Caco-2 (cell line): ENCODE measurements at regions of chr6 and their contacts with region 1.

Region 1: DNA sequence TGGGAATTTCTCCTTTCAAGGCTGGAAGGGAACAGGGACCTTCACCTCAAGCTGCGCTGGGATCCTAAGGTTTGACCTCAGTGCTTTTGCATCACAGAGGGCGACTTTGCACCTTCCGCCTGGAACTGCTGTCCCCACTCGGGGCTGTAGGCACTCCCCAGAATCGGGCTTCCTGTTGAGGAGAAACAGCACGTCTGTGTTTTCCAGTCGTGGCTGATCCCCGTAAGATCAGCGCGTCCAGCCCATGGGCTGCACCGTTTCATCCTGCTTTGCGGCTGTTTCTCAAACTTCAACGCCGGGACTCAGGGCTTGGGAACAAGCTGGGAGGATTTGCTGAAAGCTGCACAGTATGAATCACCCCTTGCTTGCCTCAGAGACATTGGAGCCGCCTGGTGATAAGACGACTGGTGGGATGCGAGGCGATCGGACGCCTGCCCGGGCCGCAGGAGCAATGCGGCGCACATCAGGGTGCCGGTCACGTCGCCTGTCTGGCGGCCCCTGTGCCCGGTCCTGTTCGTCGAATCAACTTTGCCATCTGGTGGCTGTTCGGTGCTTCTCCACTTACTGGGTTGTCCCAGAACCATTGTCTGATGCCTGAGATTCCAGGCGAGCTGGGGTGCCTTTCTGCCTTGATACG is 53.6 kb upstream of the FRMD1 start:
- DNase-seq: peak in 1 of 2 experiments; percentile 32
- H3K4me3 ChIP-seq: no peak overlapping the region
- H3K4me3 Mint-ChIP-seq: no peak overlapping the region
- H3K27ac Mint-ChIP-seq: no peak overlapping the region
- H3K4me1 ChIP-seq: peaks cover 37% of the 10 kb centered on the region
- H3K4me1 Mint-ChIP-seq: peaks cover 27% of the 10 kb centered on the region
- H3K27me3 ChIP-seq: no peaks in the 10 kb centered on the region
- H3K27me3 Mint-ChIP-seq: no peaks in the 10 kb centered on the region
- CTCF ChIP-seq: peak in 1 of 2 experiments; percentile 32

Region 2: DNA sequence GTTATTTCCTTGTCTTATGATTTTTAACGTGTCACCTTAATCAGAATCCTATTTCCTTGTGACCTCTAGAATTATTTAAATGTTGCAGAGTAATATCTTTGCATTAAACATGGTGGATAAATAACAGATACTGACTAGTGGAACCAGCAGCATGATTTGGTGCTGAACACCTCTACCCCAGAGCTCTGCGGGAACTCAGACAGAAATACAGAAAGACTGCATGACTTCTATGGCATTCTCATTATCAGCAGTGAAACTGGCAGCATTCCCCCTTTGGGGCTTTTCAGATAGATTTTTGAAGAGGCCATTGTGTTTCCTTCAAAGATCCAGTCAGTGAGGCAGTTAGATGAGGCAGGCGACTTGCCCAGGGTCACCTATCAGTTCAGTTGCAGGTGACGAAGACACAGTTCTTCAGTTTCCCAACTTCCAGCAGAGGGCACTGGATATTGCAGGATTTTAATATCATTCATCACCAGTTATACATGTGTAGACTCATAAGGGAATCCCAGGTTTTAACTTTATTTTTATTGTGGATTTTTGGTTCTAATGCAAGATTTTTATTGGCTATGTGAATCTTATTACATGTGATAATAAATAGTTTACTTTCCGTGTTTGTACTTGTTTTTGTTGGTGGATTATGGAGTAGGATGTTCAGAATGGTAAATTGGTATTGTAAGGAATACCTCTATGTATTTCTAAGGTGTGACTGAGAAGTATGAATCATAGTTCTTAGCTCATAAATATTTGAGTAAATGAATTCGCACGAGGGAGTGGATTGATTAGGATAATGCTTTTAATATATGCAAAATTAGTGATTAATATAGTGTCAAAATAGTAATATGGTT is 224.6 kb before region 1 on chr6:
- CTCF ChIA-PET with region 1: interaction called, 4 read pairs
- POLR2A ChIA-PET with region 1: no interaction called
- intact Hi-C with region 1: loop called (anchors 5 kb)
- DNase-seq: peak in 1 of 2 experiments; percentile 39
- H3K4me3 ChIP-seq: no peak overlapping the region
- H3K4me3 Mint-ChIP-seq: no peak overlapping the region
- H3K27ac Mint-ChIP-seq: no peak overlapping the region
- H3K4me1 ChIP-seq: peaks cover 13% of the 10 kb centered on the region; the same call in 1 of the 2 replicates
- H3K4me1 Mint-ChIP-seq: peaks cover 15% of the 10 kb centered on the region
- H3K27me3 ChIP-seq: no peaks in the 10 kb centered on the region
- H3K27me3 Mint-ChIP-seq: no peaks in the 10 kb centered on the region
- CTCF ChIP-seq: peak; percentile 33 to 41

Region 3: DNA sequence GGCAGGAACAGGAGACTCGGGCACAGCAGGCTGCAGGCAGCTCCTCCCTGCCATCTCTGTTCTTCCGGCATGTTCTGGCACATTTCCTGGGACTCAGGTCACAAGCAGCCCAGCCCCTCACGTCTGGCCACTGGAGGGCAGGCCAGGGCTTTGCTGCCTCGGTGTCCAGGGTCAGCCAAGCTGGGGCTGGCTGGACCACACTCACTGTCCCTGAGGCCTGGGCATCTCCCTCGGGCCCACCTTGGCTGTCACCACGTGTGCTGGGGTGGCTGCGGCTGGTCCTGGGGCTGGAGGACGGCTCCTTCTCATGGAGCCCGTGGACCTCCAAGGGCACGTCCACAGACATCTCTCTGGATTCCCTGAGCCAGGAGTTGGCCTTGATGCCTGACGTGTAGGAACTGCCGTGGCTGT is 72.1 kb before region 1 on chr6:
- CTCF ChIA-PET with region 1: interaction called, 20 read pairs
- POLR2A ChIA-PET with region 1: no interaction called
- intact Hi-C with region 1: loop called (anchors 1 kb)
- DNase-seq: peak; percentile 64 to 75
- H3K4me3 ChIP-seq: no peak overlapping the region
- H3K4me3 Mint-ChIP-seq: no peak overlapping the region
- H3K27ac Mint-ChIP-seq: peak overlapping the region; percentile 17
- H3K4me1 ChIP-seq: peaks cover 21% of the 10 kb centered on the region; the same call in 1 of the 2 replicates
- H3K4me1 Mint-ChIP-seq: peaks cover 9% of the 10 kb centered on the region
- H3K27me3 ChIP-seq: no peaks in the 10 kb centered on the region
- H3K27me3 Mint-ChIP-seq: no peaks in the 10 kb centered on the region
- CTCF ChIP-seq: peak; percentile 61 to 85

Region 4: GRCh38 chr6:168088161-168089053 is 44.2 kb before region 1 on chr6:
- CTCF ChIA-PET with region 1: no interaction called
- POLR2A ChIA-PET with region 1: no interaction called
- intact Hi-C with region 1: loop called (anchors 2 kb)
- DNase-seq: peak; percentile 88 to 93
- H3K4me3 ChIP-seq: no peak overlapping the region
- H3K4me3 Mint-ChIP-seq: peak overlapping the region; percentile 48
- H3K27ac Mint-ChIP-seq: peak overlapping the region; percentile 92
- H3K4me1 ChIP-seq: peaks cover 57% of the 10 kb centered on the region
- H3K4me1 Mint-ChIP-seq: peaks cover 33% of the 10 kb centered on the region
- H3K27me3 ChIP-seq: no peaks in the 10 kb centered on the region
- H3K27me3 Mint-ChIP-seq: no peaks in the 10 kb centered on the region
- CTCF ChIP-seq: no peak